ENCODE measurements at regions of chr1 and their contacts with region 1.

Region 1: GRCh38 chr1:171583581-171584201 is 38.4 kb upstream of the MYOCOS start:
- DNase-seq: no peak
- ATAC-seq: no peak
- H3K4me3 ChIP-seq: no peak overlapping the region
- H3K27ac ChIP-seq: no peak overlapping the region
- H3K4me1 ChIP-seq: no peaks in the 10 kb centered on the region
- H3K27me3 ChIP-seq: no peaks in the 10 kb centered on the region
- CTCF ChIP-seq: no peak

Region 2: DNA sequence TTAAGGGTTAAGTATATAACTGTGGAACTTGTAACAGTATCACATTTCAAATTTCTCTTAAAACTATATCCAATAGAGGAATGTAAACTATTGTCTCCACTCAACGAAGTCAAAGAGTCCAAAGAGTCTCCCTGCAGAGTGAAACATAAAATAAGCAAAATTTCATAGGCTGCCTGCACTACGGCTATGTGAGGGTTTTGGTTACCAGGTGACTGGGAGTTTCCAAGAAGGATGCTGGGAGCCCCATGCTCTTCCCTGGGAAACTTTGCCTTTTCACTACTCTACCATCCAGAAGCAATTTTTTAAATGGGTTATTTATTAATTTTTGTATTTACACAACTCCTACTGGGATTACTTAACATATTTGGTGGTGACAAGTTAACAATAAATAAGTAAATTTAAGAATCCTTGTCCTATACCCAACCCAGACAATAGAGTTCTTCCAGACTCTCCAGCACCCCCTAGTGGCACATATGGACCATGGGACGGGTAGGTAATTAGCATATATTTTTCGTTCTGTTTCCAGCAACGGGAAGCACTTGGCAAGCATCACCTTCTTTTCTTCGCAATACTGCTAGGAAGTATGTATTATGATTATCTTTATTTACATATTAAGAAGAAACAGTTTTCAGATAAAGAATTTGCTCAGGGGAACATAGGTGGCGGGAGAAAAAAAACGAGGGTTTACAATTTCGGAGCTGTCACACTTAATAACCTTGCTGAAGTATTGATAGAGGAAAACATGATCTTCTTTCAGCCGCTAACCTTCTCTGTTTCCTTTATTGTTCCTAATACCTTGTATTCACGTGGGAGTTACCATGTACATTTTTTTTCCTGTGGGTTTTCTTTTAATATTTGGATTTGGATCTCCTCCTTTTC is 395.1 kb before region 1 on chr1:
- intact Hi-C with region 1: no loop called
- DNase-seq: peak in 1 of 2 donors; percentile 78
- ATAC-seq: peak; percentile 60 to 88 (median 77)
- H3K4me3 ChIP-seq: peak overlapping the region; percentile 14 to 60 (median 50)
- H3K27ac ChIP-seq: peak overlapping the region; percentile 47 to 88 (median 74)
- H3K4me1 ChIP-seq: peaks cover 0 to 63% (median 33%) of the 10 kb centered on the region in 9 donors
- H3K27me3 ChIP-seq: no peaks in the 10 kb centered on the region
- CTCF ChIP-seq: peak; percentile 82 to 92 (median 88)

Region 3: DNA sequence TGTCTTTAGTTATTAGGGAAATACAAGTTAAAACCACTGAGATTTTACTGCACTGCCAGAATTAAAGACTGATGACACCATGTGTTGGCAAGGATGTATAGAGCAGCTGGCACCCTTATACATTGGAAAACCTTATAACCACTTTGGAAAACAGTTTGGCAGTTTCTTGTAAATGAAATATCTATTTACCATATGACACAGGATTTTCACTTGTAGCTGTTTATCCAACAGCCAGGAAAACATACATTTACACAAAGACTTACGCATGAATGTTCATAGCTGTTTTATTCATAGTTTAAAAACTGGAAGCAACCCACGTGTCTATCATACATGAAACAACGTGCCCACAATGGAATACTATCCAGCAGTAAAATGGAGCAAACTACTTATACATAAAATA is 53.0 kb before region 1 on chr1:
- intact Hi-C with region 1: loop called in 3 of 10 experiments (anchors 5 to 10 kb)
- DNase-seq: no peak
- ATAC-seq: no peak
- H3K4me3 ChIP-seq: no peak overlapping the region
- H3K27ac ChIP-seq: no peak overlapping the region
- H3K4me1 ChIP-seq: no peaks in the 10 kb centered on the region
- H3K27me3 ChIP-seq: no peaks in the 10 kb centered on the region
- CTCF ChIP-seq: no peak

Region 4: GRCh38 chr1:171545523-171545922 is 38.2 kb before region 1 on chr1:
- intact Hi-C with region 1: loop called in 1 of 10 experiments (anchors 5 kb)
- DNase-seq: no peak
- ATAC-seq: no peak
- H3K4me3 ChIP-seq: no peak overlapping the region
- H3K27ac ChIP-seq: no peak overlapping the region
- H3K4me1 ChIP-seq: no peaks in the 10 kb centered on the region
- H3K27me3 ChIP-seq: no peaks in the 10 kb centered on the region
- CTCF ChIP-seq: no peak

Region 5: GRCh38 chr1:171948511-171948910 is 364.8 kb after region 1 on chr1:
- intact Hi-C with region 1: no loop called
- DNase-seq: no peak
- ATAC-seq: no peak
- H3K4me3 ChIP-seq: no peak overlapping the region
- H3K27ac ChIP-seq: no peak overlapping the region
- H3K4me1 ChIP-seq: peaks cover 0 to 11% (median 0%) of the 10 kb centered on the region in 9 donors
- H3K27me3 ChIP-seq: peaks cover 0 to 4% (median 0%) of the 10 kb centered on the region in 7 donors
- CTCF ChIP-seq: no peak

Measured in heart right ventricle (tissue), 16 donors.